ENCODE measurements at regions of chr2 and their contacts with region 1.

Region 1: GRCh38 chr2:177380181-177380580 is 12.4 kb upstream of the AGPS start:
- DNase-seq: no peak
- H3K4me3 ChIP-seq: no peak overlapping the region
- H3K27ac ChIP-seq: no peak overlapping the region
- H3K4me1 ChIP-seq: no peaks in the 10 kb centered on the region
- H3K27me3 ChIP-seq: no peaks in the 10 kb centered on the region
- CTCF ChIP-seq: no peak

Region 2: GRCh38 chr2:175854665-175855064 is 1525.5 kb before region 1 on chr2:
- CTCF ChIA-PET with region 1: no interaction called
- POLR2A ChIA-PET with region 1: interaction called, 13 read pairs
- intact Hi-C with region 1: no loop called
- DNase-seq: no peak
- H3K4me3 ChIP-seq: no peak overlapping the region
- H3K27ac ChIP-seq: no peak overlapping the region
- H3K4me1 ChIP-seq: no peaks in the 10 kb centered on the region
- H3K27me3 ChIP-seq: no peaks in the 10 kb centered on the region
- CTCF ChIP-seq: no peak

Region 3: GRCh38 chr2:177506998-177507397 is 126.8 kb after region 1 on chr2:
- CTCF ChIA-PET with region 1: no interaction called
- POLR2A ChIA-PET with region 1: no interaction called
- intact Hi-C with region 1: no loop called
- DNase-seq: no peak
- H3K4me3 ChIP-seq: no peak overlapping the region
- H3K27ac ChIP-seq: no peak overlapping the region
- H3K4me1 ChIP-seq: no peaks in the 10 kb centered on the region
- H3K27me3 ChIP-seq: no peaks in the 10 kb centered on the region
- CTCF ChIP-seq: no peak